ENCODE measurements at regions of chr9 and their contacts with region 1.

Region 1: DNA sequence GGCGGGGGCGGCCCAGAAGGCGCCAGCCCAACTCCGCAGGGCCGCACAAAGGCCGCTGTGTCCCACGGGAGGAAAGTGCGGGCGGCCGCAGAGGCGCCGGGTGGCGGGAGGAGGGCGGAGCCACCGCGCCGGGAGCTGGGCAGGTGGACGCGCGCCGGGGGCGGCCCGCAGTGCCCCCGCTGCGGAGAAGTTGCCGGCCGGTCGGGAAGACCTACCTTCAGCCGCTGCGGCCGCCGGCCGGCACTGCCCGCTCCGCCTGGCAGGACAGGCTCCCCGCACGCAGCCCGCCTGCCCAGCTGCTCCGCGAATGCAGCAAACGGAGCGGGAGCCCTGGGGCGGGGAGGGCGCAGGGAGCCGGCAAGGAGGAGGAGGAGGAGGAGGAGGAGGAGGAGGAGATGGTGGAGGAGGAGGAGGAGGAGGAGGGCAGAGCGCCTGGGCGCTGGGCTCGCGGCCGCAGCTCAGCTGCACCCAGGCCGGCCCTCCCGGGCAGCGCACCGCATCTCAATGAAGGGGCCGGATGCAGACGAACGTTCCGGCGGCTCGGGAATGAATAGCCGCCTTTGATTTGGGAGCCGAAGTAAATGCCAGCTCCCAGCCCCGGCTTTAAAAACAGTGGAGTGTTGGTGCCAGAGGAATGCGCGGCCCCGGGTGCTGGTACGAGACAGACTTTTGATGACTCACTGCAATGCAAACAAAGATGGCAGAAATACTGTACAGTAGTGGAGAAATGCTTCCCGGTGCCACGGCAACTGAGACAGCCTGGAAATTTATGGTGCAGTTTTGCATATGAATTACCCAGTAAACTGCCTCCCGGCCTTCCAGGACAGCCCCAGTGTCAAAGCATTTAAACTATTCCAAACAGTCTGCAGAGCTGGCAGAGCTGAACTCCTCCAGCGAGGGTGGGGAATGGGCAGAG is 43.3 kb downstream of the NACC2 start:
- DNase-seq: peak; percentile 92 to 96
- H3K4me3 ChIP-seq: peak overlapping the region; percentile 74
- H3K27ac ChIP-seq: peak overlapping the region; percentile 65
- H3K4me1 ChIP-seq: peaks cover 33% of the 10 kb centered on the region
- H3K27me3 ChIP-seq: no peaks in the 10 kb centered on the region
- CTCF ChIP-seq: no peak

Region 2: GRCh38 chr9:136079211-136079915 is 27.6 kb after region 1 on chr9:
- CTCF ChIA-PET with region 1: interaction called, 5 read pairs
- POLR2A ChIA-PET with region 1: interaction called, 8 read pairs
- intact Hi-C with region 1: loop called (anchors 1 kb)
- DNase-seq: peak; percentile 72 to 90
- H3K4me3 ChIP-seq: no peak overlapping the region
- H3K27ac ChIP-seq: no peak overlapping the region
- H3K4me1 ChIP-seq: peaks cover 13% of the 10 kb centered on the region; the same call in 1 of the 2 replicates
- H3K27me3 ChIP-seq: no peaks in the 10 kb centered on the region
- CTCF ChIP-seq: no peak

Region 3: DNA sequence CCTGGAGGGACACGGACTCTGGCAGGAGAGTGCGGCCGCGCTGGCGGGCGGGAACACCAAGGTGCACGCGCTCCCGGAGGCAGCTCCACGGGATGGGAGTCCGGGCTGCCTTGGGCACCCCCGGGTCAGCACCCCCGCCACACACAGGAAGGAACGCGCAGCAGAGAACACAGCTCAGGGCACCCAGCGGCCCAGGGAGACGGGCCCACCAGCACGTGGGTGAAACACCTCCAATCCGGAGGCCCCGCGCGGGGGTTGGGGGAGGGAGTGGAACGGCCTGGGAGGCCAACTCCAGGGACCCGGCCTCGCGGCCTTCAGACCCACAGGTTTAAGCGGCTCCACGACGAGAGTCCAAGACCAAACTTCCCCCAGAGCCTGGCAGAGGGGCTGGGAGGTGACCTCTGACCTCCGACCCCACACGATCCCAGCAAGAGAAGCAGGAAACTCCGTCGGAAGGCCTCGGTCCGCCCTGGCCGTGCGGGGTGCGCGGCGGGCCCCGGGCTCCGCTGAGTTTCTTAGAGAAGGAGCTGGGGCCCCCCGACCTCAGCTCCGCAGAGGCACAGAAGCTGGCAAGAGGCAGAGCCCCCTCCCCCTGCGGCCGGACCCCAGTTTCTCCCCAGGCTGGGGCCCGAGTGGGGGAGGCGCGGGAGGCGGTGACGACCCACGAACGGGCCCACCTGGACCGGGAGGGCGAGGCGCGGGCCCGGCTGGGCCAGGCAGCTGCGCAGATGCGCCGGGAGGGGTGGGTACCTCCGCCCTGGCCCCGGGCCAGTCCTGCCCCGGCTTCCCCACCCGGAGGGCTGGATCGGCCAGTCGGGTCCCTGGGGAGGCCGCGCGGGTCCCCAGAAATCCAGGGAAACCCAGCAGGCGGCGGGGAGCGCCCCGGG is 42.5 kb after region 1 on chr9:
- CTCF ChIA-PET with region 1: interaction called, 7 read pairs
- POLR2A ChIA-PET with region 1: no interaction called
- intact Hi-C with region 1: loop called (anchors 1 kb)
- DNase-seq: peak in 1 of 2 experiments; percentile 76
- H3K4me3 ChIP-seq: peak overlapping the region; percentile 88
- H3K27ac ChIP-seq: no peak overlapping the region
- H3K4me1 ChIP-seq: peaks cover 22% of the 10 kb centered on the region
- H3K27me3 ChIP-seq: no peaks in the 10 kb centered on the region
- CTCF ChIP-seq: no peak

Region 4: GRCh38 chr9:136840140-136840687 is 788.4 kb after region 1 on chr9:
- CTCF ChIA-PET with region 1: no interaction called
- POLR2A ChIA-PET with region 1: interaction called, 18 read pairs
- intact Hi-C with region 1: no loop called
- DNase-seq: peak; percentile 46 to 51
- H3K4me3 ChIP-seq: peak overlapping the region; percentile 35; the same call in 1 of the 2 replicates
- H3K27ac ChIP-seq: no peak overlapping the region
- H3K4me1 ChIP-seq: 0 out of 2 replicates have a peak, but pooled peaks cover 2% of the 10 kb centered on the region
- H3K27me3 ChIP-seq: no peaks in the 10 kb centered on the region
- CTCF ChIP-seq: no peak

Region 5: DNA sequence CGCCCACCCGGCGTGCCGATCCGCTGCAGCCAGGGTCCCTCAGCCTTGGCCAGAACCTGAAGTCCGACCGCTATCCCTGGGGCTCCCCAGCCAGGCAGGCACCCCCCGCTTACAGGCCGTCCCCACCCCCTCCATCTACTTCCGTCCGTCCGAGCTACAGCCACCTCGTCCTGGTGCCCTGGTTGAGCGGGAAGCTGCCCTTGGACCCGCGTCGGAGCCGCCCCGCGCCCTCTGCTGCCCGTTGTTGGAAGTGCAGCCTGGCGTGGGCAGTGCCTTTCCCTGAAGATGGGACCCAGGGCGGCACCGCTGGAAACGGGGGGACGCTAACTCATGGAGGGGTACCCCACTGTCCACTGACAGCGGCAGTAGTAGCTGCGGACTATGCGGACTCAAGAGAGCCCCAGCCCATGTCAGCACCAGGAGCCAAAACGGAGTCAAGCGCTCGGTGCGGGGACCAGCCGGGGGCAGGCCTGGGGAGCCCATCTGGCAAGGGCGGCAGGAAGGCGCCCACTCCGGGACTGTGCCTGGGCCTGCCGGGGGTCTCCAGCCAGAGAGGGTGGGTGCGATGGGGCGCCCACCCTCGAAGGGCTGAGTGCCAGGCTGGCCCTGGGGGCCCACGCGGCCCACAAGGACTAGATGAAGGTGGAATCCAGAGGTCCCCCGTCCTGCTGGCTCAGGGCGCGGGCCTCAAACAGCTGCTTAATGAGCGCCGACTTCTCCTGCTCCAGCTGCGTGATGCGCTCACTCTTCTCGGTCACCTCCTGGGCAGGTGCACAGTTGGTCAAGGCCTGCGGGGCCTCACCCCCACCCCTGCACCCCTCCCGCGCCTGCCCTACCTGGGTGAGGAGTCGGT is 1012.5 kb after region 1 on chr9:
- CTCF ChIA-PET with region 1: no interaction called
- POLR2A ChIA-PET with region 1: no interaction called
- intact Hi-C with region 1: no loop called
- DNase-seq: peak in 1 of 2 experiments; percentile 62
- H3K4me3 ChIP-seq: no peak overlapping the region
- H3K27ac ChIP-seq: no peak overlapping the region
- H3K4me1 ChIP-seq: peaks cover 14% of the 10 kb centered on the region
- H3K27me3 ChIP-seq: no peaks in the 10 kb centered on the region
- CTCF ChIP-seq: peak; percentile 98